ENCODE measurements at regions of chr7 and their contacts with region 1.

Region 1: DNA sequence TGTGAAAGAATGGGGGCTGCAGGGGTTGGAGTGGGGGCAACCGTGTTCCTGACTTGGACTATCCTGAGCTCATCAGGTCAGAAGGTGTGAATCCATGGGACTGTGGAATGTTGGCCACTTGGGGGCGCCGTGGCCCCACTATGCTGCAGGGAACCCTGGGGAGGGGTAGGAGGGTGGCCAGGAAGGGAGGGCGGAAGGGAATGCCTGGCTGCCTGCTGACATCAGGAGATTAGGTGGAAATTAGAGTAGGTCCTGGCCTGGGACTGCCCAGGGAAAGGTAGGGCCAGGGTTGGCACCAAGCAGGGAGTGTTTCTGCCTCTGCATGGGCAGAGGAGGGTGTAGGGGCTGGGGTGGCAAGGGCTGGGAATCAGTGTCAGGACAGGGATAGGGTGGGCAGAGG is 65.8 kb upstream of the PRSS58 start:
- DNase-seq: peak; percentile 66 to 85
- H3K4me3 ChIP-seq: no peak overlapping the region
- H3K27ac ChIP-seq: no peak overlapping the region
- H3K4me1 ChIP-seq: peaks cover 13% of the 10 kb centered on the region
- H3K27me3 ChIP-seq: no peaks in the 10 kb centered on the region
- CTCF ChIP-seq: peak; percentile 88

Region 2: GRCh38 chr7:142338633-142339501 is 15.2 kb after region 1 on chr7:
- CTCF ChIA-PET with region 1: interaction called, 15 read pairs
- POLR2A ChIA-PET with region 1: no interaction called
- intact Hi-C with region 1: no loop called
- DNase-seq: peak; percentile 61 to 88
- H3K4me3 ChIP-seq: no peak overlapping the region
- H3K27ac ChIP-seq: no peak overlapping the region
- H3K4me1 ChIP-seq: no peaks in the 10 kb centered on the region
- H3K27me3 ChIP-seq: no peaks in the 10 kb centered on the region
- CTCF ChIP-seq: peak; percentile 76

Region 3: GRCh38 chr7:142516038-142516501 is 192.4 kb after region 1 on chr7:
- CTCF ChIA-PET with region 1: interaction called, 13 read pairs
- POLR2A ChIA-PET with region 1: no interaction called
- intact Hi-C with region 1: no loop called
- DNase-seq: peak; percentile 72 to 87
- H3K4me3 ChIP-seq: no peak overlapping the region
- H3K27ac ChIP-seq: peak overlapping the region; percentile 79
- H3K4me1 ChIP-seq: peaks cover 48% of the 10 kb centered on the region
- H3K27me3 ChIP-seq: no peaks in the 10 kb centered on the region
- CTCF ChIP-seq: peak; percentile 97

Region 4: DNA sequence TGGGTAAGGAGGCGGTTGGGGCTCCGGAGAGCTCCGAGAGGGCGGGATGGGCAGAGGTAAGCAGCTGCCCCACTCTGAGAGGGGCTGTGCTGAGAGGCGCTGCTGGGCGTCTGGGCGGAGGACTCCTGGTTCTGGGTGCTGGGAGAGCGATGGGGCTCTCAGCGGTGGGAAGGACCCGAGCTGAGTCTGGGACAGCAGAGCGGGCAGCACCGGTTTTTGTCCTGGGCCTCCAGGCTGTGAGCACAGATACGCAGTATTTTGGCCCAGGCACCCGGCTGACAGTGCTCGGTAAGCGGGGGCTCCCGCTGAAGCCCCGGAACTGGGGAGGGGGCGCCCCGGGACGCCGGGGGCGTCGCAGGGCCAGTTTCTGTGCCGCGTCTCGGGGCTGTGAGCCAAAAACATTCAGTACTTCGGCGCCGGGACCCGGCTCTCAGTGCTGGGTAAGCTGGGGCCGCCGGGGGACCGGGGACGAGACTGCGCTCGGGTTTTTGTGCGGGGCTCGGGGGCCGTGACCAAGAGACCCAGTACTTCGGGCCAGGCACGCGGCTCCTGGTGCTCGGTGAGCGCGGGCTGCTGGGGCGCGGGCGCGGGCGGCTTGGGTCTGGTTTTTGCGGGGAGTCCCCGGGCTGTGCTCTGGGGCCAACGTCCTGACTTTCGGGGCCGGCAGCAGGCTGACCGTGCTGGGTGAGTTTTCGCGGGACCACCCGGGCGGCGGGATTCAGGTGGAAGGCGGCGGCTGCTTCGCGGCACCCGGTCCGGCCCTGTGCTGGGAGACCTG is 473.1 kb after region 1 on chr7:
- CTCF ChIA-PET with region 1: interaction called, 4 read pairs
- POLR2A ChIA-PET with region 1: no interaction called
- intact Hi-C with region 1: loop called (anchors 5 kb)
- DNase-seq: peak; percentile 35 to 36
- H3K4me3 ChIP-seq: peak overlapping the region; percentile 93
- H3K27ac ChIP-seq: peak overlapping the region; percentile 92
- H3K4me1 ChIP-seq: peaks cover 55% of the 10 kb centered on the region
- H3K27me3 ChIP-seq: no peaks in the 10 kb centered on the region
- CTCF ChIP-seq: no peak

Region 5: GRCh38 chr7:143002106-143002505 is 678.4 kb after region 1 on chr7:
- CTCF ChIA-PET with region 1: no interaction called
- POLR2A ChIA-PET with region 1: no interaction called
- intact Hi-C with region 1: loop called (anchors 1 kb)
- DNase-seq: peak in 1 of 2 experiments; percentile 12
- H3K4me3 ChIP-seq: no peak overlapping the region
- H3K27ac ChIP-seq: no peak overlapping the region
- H3K4me1 ChIP-seq: peaks cover 4% of the 10 kb centered on the region; the same call in 1 of the 2 replicates
- H3K27me3 ChIP-seq: no peaks in the 10 kb centered on the region
- CTCF ChIP-seq: peak; percentile 73